CD4-positive, alpha-beta memory T cell (primary cell): ENCODE measurements at regions of chr16 and their contacts with region 1.

Region 1: DNA sequence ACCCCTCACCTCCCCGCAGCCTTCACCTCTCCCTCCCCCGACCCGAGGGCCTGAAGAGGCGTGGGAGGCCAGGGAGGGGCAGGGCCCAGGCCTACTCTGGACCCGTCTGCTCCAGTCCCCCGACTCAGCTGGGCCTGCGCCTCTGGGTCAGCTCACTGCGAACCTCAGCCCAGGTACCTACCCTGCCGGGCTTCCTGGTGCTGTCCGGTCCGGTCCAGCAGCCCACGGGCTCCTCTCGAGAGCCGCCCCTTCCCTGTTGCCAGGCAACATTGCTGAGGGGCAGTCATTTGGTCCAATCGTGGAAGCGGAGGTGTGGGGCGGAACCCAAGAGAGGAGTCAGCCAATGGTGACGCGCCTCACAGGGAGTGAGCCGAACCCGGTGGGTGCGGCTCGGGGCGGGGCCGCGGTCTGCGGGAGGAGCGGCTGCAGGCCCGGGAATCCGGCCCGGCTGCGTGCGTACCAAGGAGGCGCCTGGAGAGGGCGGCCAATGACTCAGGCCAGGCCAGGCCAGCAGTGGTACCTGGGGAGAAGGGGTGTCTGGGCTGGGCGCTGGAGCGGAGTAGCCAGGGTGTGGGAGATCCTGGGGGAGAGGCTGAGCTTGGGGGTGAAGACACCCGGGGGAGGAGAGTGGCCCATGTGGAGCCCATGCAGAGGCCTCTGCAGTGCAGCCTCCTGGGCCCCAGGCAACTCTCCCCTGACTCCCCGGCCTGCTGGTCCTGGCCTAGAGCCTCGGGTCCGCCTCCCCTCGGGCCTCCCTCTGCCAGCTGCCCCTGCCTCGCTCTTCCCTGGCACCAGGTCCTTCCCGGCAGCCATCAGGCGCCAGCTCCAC is at the start of gene MEAK7:
- DNase-seq: peak; percentile 95 to 98 (median 96)
- H3K4me3 ChIP-seq: peak within 1 kb of the TSS; percentile 84 to 85
- H3K4me3 Mint-ChIP-seq: peak within 1 kb of the TSS; percentile 87 to 94 (median 91)
- H3K27ac ChIP-seq: peak within 1 kb of the TSS; percentile 74
- H3K27ac Mint-ChIP-seq: peak within 1 kb of the TSS; percentile 80 to 92 (median 88)
- H3K4me1 ChIP-seq: peaks cover 55% of the 10 kb centered on the region
- H3K4me1 Mint-ChIP-seq: peaks cover 33 to 56% (median 44%) of the 10 kb centered on the region in 4 donors
- H3K27me3 ChIP-seq: no peaks in the 10 kb centered on the region
- H3K27me3 Mint-ChIP-seq: no peaks in the 10 kb centered on the region
- total RNA-seq, gene MEAK7: 13.6 to 16.8 TPM

Region 2: GRCh38 chr16:84277237-84277823 is 227.3 kb before region 1 on chr16:
- CTCF ChIA-PET with region 1: interaction called, 34 read pairs
- POLR2A ChIA-PET with region 1: interaction called, 3 read pairs
- intact Hi-C with region 1: no loop called
- DNase-seq: peak; percentile 45 to 59 (median 55)
- H3K4me3 ChIP-seq: no peak overlapping the region
- H3K4me3 Mint-ChIP-seq: no peak overlapping the region
- H3K27ac ChIP-seq: no peak overlapping the region
- H3K27ac Mint-ChIP-seq: no peak overlapping the region
- H3K4me1 ChIP-seq: no peaks in the 10 kb centered on the region
- H3K4me1 Mint-ChIP-seq: peaks cover 0 to 1% (median 0%) of the 10 kb centered on the region in 4 donors
- H3K27me3 ChIP-seq: peaks cover 3% of the 10 kb centered on the region
- H3K27me3 Mint-ChIP-seq: peaks cover 10 to 18% of the 10 kb centered on the region in 2 donors

Region 3: GRCh38 chr16:84574191-84574590 is 69.6 kb after region 1 on chr16:
- CTCF ChIA-PET with region 1: no interaction called
- POLR2A ChIA-PET with region 1: no interaction called
- intact Hi-C with region 1: no loop called
- DNase-seq: no peak
- H3K4me3 ChIP-seq: no peak overlapping the region
- H3K4me3 Mint-ChIP-seq: no peak overlapping the region
- H3K27ac ChIP-seq: no peak overlapping the region
- H3K27ac Mint-ChIP-seq: peak overlapping the region in 2 of 7 donors; percentile 18 to 50
- H3K4me1 ChIP-seq: peaks cover 31% of the 10 kb centered on the region
- H3K4me1 Mint-ChIP-seq: peaks cover 28 to 65% (median 42%) of the 10 kb centered on the region in 4 donors
- H3K27me3 ChIP-seq: no peaks in the 10 kb centered on the region
- H3K27me3 Mint-ChIP-seq: no peaks in the 10 kb centered on the region

Region 4: DNA sequence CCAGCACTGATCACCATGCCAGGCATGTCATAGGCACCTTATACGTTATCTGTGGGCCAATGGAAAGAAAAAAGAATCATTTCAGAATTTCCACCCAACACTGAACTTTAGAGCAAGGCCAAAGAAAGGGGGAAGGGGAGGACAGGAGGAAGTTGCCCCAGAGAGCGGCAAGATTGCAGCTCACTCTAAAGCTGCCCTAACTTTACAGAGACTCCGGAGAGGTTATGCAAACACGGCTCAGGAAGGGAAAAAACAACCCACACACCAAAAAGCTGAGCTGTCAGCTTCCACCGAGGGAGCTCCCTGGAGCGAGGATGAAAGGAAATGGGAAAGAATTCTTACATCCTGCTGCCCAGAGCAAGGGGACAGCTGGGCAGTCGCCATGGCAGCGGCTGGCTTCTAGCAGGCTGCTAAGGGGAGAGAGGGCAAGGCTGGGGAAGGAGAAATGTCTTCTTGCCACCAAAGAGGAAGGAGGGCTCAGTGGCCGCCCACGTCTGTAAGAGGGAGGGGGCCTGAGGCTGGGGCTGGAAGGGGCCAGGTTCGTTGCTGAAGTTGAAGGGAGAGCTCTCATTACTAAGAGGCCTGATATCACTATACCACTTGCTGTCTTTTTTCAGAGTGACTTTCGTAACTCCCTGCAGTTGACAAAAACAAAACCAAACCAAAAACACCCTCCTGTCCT is 95.0 kb after region 1 on chr16:
- CTCF ChIA-PET with region 1: interaction called, 37 read pairs
- POLR2A ChIA-PET with region 1: interaction called, 9 read pairs
- intact Hi-C with region 1: no loop called
- DNase-seq: peak in 4 of 5 donors; percentile 37 to 72 (median 48)
- H3K4me3 ChIP-seq: peak overlapping the region; percentile 57
- H3K4me3 Mint-ChIP-seq: peak overlapping the region; percentile 82 to 92 (median 88)
- H3K27ac ChIP-seq: peak overlapping the region; percentile 89
- H3K27ac Mint-ChIP-seq: peak overlapping the region; percentile 94 to 98 (median 95)
- H3K4me1 ChIP-seq: peaks cover 97% of the 10 kb centered on the region
- H3K4me1 Mint-ChIP-seq: peaks cover 72 to 96% (median 84%) of the 10 kb centered on the region in 4 donors
- H3K27me3 ChIP-seq: no peaks in the 10 kb centered on the region
- H3K27me3 Mint-ChIP-seq: no peaks in the 10 kb centered on the region

Region 5: GRCh38 chr16:84647828-84648594 is 143.4 kb after region 1 on chr16 and contains the start of gene KLHL36:
- CTCF ChIA-PET with region 1: interaction called, 5 read pairs
- POLR2A ChIA-PET with region 1: interaction called, 28 read pairs
- intact Hi-C with region 1: no loop called
- DNase-seq: peak; percentile 68 to 76 (median 72)
- H3K4me3 ChIP-seq: peak within 1 kb of the TSS; percentile 32 to 75
- H3K4me3 Mint-ChIP-seq: peak within 1 kb of the TSS; percentile 86 to 96 (median 94)
- H3K27ac ChIP-seq: peak within 1 kb of the TSS; percentile 62
- H3K27ac Mint-ChIP-seq: peak within 1 kb of the TSS; percentile 86 to 97 (median 96)
- H3K4me1 ChIP-seq: peaks cover 47% of the 10 kb centered on the region
- H3K4me1 Mint-ChIP-seq: peaks cover 30 to 53% (median 41%) of the 10 kb centered on the region in 4 donors
- H3K27me3 ChIP-seq: no peaks in the 10 kb centered on the region
- H3K27me3 Mint-ChIP-seq: no peaks in the 10 kb centered on the region
- total RNA-seq, gene KLHL36: 131 to 149 TPM

Region 6: GRCh38 chr16:84726079-84726668 is 221.5 kb after region 1 on chr16:
- CTCF ChIA-PET with region 1: interaction called, 78 read pairs
- POLR2A ChIA-PET with region 1: interaction called, 7 read pairs
- intact Hi-C with region 1: no loop called
- DNase-seq: peak; percentile 70 to 80 (median 76)
- H3K4me3 ChIP-seq: no peak overlapping the region
- H3K4me3 Mint-ChIP-seq: peak overlapping the region in 6 of 8 donors; percentile 33 to 76 (median 56)
- H3K27ac ChIP-seq: no peak overlapping the region
- H3K27ac Mint-ChIP-seq: peak overlapping the region in 4 of 7 donors; percentile 45 to 66 (median 52)
- H3K4me1 ChIP-seq: peaks cover 47% of the 10 kb centered on the region
- H3K4me1 Mint-ChIP-seq: peaks cover 40 to 67% (median 57%) of the 10 kb centered on the region in 4 donors
- H3K27me3 ChIP-seq: no peaks in the 10 kb centered on the region
- H3K27me3 Mint-ChIP-seq: no peaks in the 10 kb centered on the region

Region 7: GRCh38 chr16:85027349-85027957 is 522.8 kb after region 1 on chr16 and contains the start of gene KIAA0513:
- CTCF ChIA-PET with region 1: no interaction called
- POLR2A ChIA-PET with region 1: no interaction called
- intact Hi-C with region 1: loop called (anchors 5 kb)
- DNase-seq: peak; percentile 91 to 98 (median 96)
- H3K4me3 ChIP-seq: peak within 1 kb of the TSS; percentile 58 to 82
- H3K4me3 Mint-ChIP-seq: peak within 1 kb of the TSS; percentile 88 to 98 (median 94)
- H3K27ac ChIP-seq: peak within 1 kb of the TSS; percentile 78
- H3K27ac Mint-ChIP-seq: peak within 1 kb of the TSS; percentile 92 to 98 (median 95)
- H3K4me1 ChIP-seq: peaks cover 28% of the 10 kb centered on the region
- H3K4me1 Mint-ChIP-seq: peaks cover 19 to 44% (median 26%) of the 10 kb centered on the region in 4 donors
- H3K27me3 ChIP-seq: no peaks in the 10 kb centered on the region
- H3K27me3 Mint-ChIP-seq: no peaks in the 10 kb centered on the region
- total RNA-seq, gene KIAA0513: 17.7 to 19.0 TPM

Region 8: DNA sequence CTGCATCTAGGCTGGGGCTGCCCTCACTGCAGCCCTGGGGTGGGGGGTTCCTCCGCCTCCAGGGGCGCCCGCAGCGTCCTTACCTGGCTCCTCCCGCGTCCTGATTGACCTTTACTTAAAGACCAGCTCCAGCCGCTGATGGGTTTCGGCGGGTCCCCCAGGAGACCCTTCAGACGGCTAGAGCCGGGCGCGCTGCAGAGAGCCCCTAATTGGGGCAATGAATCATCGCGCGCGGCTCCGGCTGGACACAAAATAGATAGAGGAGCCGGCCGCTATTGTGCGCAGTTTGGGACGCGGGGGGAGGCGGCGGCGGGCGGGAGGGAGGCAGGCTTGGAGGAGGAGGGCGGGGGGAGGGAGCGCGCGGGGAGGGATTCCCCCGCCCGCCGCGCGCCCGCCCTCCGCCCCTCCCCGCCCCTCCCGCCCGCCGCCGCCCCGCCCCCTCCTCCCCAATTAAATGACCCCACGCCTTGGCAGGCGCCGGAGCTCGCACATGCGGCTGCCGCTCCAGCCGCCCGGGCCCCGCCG is 664.2 kb after region 1 on chr16:
- CTCF ChIA-PET with region 1: no interaction called
- POLR2A ChIA-PET with region 1: no interaction called
- intact Hi-C with region 1: no loop called
- DNase-seq: no peak
- H3K4me3 ChIP-seq: no peak overlapping the region
- H3K4me3 Mint-ChIP-seq: peak overlapping the region in 3 of 8 donors; percentile 36 to 61 (median 40)
- H3K27ac ChIP-seq: no peak overlapping the region
- H3K27ac Mint-ChIP-seq: no peak overlapping the region
- H3K4me1 ChIP-seq: no peaks in the 10 kb centered on the region
- H3K4me1 Mint-ChIP-seq: peaks cover 0 to 3% (median 0%) of the 10 kb centered on the region in 4 donors
- H3K27me3 ChIP-seq: peaks cover 6% of the 10 kb centered on the region
- H3K27me3 Mint-ChIP-seq: peaks cover 26 to 50% of the 10 kb centered on the region in 2 donors